ENCODE measurements at regions of chr1 and their contacts with region 1.

Region 1: DNA sequence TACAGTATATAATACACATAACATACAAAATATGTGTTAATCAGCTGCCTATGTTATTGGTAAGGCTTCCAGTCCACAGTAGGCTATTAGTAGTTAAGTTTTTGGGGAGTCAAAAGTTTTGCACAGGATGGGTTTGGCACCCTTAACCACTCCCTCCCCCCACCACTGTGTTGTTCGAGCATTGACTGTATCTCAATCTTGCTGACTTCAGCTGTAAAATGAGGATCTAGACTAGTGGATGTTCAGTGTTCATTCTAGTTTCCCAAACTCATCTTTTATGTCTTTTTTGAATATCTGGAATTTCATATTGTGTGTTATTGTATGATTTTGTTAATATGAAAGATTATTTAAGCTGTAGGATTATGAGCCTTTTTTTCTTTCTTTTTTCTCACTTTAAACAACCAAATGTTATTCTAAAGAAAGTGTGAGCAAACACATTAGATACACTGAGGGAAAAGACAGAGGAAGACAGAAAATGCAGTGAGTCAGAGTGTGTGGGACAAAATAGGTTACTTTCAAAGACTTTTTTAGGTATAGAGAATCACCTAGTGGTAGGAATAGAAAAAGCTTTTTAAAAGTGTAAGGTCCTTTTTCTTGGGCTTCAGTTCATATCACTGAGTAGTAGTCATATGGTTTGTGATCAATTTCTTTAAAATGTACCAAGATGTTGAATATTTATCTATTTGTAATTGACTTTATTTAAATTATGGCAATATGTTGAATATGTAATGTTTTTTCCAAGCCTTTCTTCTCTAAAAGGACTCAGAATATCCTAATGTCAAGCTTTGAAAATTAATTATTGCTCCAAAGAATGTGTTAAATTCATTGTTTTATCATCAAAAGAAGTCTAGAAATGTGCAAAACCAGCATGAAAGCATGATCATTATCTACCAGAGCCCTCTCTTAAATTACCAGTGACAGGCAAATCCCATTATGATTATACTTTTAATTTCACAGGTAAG is 17.9 kb upstream of the CENPF start:
- DNase-seq: no peak

Region 2: DNA sequence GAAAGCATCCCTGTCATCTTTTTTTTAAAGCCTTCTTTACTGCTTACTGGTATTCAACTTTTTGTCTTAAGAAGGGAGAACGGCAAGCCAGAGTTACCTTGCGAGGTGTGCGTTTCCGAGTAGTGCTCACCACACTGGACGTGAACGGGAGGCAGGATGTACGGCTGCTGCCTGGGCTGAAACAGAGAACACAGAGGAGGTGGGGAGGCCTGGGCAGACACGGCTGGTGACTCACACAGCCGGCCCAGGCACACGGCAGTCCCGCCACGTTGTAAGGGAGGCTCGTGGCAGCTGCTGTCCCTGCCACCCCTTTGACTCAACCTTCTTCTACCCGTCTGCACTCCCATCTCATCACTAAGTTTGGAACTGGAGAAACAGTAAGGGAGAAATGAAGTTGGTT is 198.3 kb before region 1 on chr1:
- intact Hi-C with region 1: loop called (anchors 5 kb)
- DNase-seq: no peak

Region 3: DNA sequence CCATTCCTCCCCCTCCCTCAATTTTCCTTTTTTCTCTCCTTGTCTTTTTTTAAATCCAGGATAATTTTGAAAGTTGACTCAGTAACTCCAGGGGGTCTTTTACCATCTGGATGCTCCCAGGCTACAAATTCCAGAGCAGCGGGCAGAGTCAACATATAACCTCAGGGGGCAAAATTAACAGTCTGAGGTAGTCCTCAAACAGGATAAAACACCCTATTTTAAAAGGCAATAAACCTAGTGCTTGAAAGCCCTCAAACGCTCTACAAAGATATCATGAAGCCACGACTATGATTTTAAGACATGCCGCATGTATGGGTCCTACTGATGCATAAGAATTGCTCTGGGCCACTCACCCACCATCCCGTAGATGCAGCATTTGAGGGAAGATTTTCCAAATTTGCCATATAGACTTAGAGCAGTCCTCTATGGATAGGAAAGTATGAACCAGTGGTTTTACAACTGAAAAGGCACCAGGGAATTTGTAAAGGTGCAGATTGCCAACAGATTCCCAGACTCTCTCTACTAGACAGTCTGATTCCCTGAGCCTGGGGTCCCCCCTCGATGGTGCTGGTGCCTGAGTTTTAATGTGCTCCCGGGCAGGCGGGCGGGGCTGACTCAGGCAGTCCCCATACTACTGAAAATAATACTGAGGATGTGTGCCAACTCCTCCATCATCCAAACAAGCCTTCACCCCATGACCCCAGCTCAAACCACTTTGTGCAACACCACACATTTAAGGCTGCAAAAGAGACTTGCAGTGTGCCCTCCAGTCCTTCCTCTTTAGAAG is 70.9 kb before region 1 on chr1:
- intact Hi-C with region 1: no loop called
- DNase-seq: no peak

Region 4: GRCh38 chr1:214623430-214623829 is 38.3 kb after region 1 on chr1:
- intact Hi-C with region 1: no loop called
- DNase-seq: no peak